Sigmoid colon (tissue), 7 donors: ENCODE measurements at regions of chr6 and their contacts with region 1.

Region 1: DNA sequence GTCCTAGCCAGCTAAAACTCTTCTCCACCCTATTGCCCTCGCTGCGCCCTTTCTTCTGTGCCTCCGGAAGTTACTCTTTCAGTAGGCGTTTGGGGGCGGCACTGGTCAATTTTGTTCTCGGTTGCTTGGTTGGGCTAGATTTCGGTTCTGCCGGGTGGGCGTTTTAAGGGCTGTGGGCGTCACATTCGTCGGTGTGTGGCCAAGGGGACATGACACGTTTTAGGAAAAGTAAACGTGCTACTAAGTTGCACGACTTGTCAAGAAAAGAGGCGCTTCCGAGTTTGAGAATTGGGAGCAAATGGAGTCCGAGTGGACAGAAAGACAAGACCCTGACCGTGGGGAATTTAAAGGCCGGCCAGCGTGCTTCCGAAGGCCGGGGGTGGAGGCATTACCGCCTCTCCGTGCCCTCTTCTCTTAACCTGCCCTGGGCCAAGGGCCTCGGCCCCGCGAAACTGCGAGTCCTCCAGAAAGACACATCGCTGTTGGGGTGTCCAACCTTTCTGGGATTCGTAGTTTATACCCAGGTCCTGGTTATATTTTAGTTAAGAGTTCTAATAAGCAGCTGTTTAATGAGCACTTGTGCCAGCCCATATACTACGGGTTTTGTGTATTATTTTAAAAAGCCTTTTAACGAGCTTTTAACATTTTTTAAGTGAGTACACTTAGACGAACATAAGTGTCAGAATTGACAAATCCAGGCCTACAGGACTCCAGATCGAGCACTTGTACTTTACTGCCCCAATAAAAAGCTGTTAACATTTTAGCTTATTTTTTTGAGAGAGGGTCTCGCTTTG is 661 bp upstream of the BAG6 start:
- DNase-seq: peak; percentile 95
- H3K4me3 ChIP-seq: peak overlapping the region; percentile 67 to 83 (median 78)
- H3K27ac ChIP-seq: peak overlapping the region; percentile 96 to 99 (median 98)
- H3K4me1 ChIP-seq: peaks cover 0 to 34% (median 26%) of the 10 kb centered on the region in 4 donors
- H3K27me3 ChIP-seq: no peaks in the 10 kb centered on the region
- CTCF ChIP-seq: no peak
- EP300 ChIP-seq: no peak
- POLR2A ChIP-seq: peak; percentile 71 to 75

Region 2: DNA sequence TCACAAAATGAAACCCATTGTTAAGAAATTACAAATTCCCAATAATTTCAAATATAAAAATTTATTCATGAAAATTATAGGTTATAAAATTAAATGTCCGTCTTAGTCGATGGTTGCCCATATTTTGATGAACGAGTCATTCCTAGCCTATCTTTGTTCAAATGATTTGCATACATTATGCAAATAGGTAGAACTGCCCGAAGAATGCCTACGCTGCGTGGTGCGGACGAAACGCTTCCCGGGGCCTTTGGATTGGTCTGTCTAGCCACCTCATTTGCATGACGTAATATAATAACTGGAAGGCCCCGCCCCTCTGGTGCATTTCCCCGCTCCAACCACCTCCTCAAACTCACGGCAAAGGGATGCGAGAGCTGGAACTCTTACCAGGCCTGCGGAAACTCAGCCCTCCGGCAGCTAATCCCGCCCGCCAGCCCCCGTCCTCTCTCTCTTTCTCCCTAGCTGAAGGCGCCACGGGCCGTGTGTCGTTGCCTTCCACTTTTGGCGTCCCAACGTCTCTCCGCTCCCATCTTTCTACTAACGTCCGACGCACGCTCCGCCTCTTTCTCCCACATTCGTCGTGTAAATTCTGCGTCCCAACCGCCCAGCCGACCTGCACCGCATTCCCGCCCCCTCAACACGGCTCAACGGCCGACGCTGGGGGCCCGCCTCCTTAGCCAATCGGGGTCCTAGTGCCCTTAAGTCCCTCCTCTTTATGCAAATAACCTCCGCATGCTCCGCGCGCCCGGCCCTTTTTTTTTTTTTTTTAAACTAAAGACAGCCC is 33.1 kb before region 1 on chr6:
- intact Hi-C with region 1: loop called (anchors 2 kb)
- DNase-seq: peak; percentile 99
- H3K4me3 ChIP-seq: peak overlapping the region; percentile 72 to 87 (median 82)
- H3K27ac ChIP-seq: peak overlapping the region; percentile 97 to 98 (median 98)
- H3K4me1 ChIP-seq: peaks cover 2 to 24% (median 20%) of the 10 kb centered on the region in 4 donors
- H3K27me3 ChIP-seq: no peaks in the 10 kb centered on the region
- CTCF ChIP-seq: no peak
- EP300 ChIP-seq: peak in 1 of 4 donors; percentile 27
- POLR2A ChIP-seq: peak; percentile 80 to 87